ENCODE measurements at regions of chr2 and their contacts with region 1.

Region 1: GRCh38 chr2:98518090-98518489 is 73.4 kb downstream of the INPP4A start:
- DNase-seq: no peak
- H3K4me3 ChIP-seq: no peak overlapping the region
- H3K27ac ChIP-seq: no peak overlapping the region
- H3K4me1 ChIP-seq: peaks cover 0 to 3% (median 0%) of the 10 kb centered on the region in 3 donors
- H3K27me3 ChIP-seq: no peaks in the 10 kb centered on the region
- CTCF ChIP-seq: peak; percentile 15

Region 2: GRCh38 chr2:98412751-98413458 is 105.2 kb before region 1 on chr2:
- intact Hi-C with region 1: loop called (anchors 10 kb)
- DNase-seq: peak in 2 of 5 donors; percentile 49 to 64
- H3K4me3 ChIP-seq: no peak overlapping the region
- H3K27ac ChIP-seq: no peak overlapping the region
- H3K4me1 ChIP-seq: peaks cover 0 to 3% (median 0%) of the 10 kb centered on the region in 3 donors
- H3K27me3 ChIP-seq: no peaks in the 10 kb centered on the region
- CTCF ChIP-seq: peak; percentile 67

Region 3: GRCh38 chr2:98835831-98836385 is 317.8 kb after region 1 on chr2:
- intact Hi-C with region 1: no loop called
- DNase-seq: no peak
- H3K4me3 ChIP-seq: no peak overlapping the region
- H3K27ac ChIP-seq: no peak overlapping the region
- H3K4me1 ChIP-seq: peaks cover 0 to 4% (median 3%) of the 10 kb centered on the region in 3 donors
- H3K27me3 ChIP-seq: no peaks in the 10 kb centered on the region
- CTCF ChIP-seq: no peak